ENCODE measurements at regions of chr6 and their contacts with region 1.

Region 1: DNA sequence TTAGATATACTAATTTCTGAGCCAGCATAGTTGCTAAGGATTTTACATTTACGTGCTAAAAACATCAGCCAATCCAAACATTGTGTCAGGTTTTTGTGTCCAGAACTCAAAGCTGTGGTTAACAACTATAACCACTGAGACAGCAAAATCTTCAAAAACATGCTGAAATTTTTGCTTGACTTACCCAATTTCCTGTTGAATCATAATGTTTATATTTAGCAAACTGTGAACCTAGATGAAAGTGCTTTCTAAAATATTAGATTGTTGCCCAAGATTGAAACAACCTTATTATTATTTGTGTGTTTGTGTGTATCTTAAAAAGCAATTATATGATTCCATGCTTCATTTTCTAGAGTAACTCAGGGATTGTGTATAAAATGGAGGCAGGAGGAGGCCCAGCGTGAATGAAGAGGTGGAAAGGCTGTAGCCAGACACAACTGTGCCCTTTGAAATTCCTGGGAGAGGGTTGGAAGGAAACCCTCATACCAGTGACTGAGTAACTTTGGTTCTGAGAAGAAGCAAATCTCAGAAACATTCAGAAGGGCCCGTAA is 48.0 kb downstream of the ARMC2 start:
- DNase-seq: no peak
- CTCF ChIP-seq: no peak

Region 2: DNA sequence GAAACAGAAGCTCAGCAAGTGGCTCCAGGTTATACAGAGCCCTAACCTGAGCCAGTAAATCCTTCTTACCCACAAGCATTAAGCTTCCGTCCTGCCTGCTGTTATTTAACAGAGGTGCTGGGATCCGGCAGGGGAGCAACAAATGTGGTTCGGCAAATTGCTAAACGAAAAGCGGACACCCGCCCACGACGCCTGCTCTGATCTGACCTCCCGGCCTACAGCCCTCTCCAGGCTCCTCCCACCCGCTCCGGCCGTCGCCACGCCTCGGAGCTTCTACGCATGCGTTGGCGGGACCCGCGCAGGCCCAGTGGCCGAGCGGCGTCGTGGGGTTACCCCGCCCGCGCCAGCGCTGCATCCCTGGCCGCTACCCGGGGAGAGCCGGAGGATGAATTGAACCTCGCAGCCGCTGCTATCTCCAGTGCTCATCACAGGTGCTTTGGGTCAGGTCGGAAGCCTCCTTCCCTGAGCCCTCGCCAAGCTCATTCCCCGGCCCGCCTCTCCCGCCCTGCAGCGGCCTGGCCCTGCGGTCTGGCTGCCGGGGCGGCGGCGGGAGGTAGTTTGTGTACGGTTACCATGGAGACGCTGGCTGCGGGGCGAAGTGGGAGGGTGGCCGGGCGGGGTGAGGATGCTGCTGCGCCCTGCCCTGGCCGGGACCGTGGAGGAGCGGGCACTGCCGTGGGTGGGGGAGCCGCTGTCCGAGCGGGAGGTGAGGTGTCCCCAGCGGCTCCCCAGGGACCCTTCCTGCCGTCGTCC is 47.9 kb before region 1 on chr6 and contains the start of gene ARMC2:
- CTCF ChIA-PET with region 1: interaction called, 10 read pairs
- POLR2A ChIA-PET with region 1: no interaction called
- DNase-seq: peak; percentile 92
- CTCF ChIP-seq: no peak

Region 3: DNA sequence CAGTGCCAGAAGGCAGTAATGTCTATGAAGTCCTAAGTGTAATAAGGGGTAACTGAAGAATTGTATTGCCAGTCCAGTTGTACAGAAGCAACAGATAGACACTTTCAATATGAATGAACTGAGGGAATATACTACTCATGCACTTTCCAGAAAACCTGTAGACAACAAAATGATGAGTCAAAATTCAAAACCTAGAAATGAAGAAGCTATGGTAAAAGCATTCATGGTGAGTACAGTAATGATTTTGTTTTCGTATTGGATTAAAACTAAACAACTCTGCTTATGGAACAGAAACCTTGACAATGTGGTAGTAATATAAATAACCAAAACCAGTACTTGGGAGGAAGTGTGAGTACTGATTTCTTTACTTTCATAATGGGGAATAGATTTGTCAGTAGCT is 13.0 kb before region 1 on chr6:
- CTCF ChIA-PET with region 1: interaction called, 13 read pairs
- POLR2A ChIA-PET with region 1: no interaction called
- DNase-seq: peak; percentile 20
- CTCF ChIP-seq: no peak

Region 4: DNA sequence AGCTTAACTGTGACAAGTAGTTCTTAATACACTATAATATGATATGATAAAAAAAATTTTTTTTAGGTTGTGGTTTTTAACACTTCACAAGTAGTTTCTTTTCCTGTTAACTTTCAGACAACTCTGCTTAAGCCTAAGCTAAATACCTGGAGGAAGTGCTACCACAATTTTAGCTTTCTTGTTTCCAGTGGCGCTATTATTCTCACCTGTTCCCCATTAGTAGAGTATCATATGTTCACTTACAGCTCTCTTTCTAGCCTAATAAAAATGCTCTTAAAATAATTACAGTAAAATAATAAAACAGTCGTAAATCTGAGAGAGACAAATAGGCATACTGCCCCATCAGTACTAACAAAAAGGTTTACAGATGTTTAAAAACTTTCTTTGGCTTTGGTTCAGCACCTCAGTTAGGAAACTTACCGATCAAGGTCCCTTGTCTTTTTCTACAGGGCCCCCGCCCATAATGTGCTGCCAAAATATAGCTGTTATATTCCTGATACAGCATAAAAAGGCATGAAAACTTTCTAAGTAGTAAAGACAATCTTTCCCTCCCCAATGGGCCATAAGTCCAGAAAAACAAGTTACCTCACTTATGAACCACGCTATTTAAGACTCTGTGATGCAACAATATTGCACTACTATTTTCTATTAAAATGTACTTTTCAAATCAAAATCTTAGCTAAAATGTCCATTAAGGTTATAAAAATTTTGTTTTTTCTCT is 140.5 kb after region 1 on chr6:
- CTCF ChIA-PET with region 1: no interaction called
- POLR2A ChIA-PET with region 1: no interaction called
- DNase-seq: no peak
- CTCF ChIP-seq: no peak

Measured in GM10248 (cell line).